Activated B cell treated with CpG ODN at 0.5 μM for 24 hours (primary cell): ENCODE measurements at regions of chr21 and their contacts with region 1.

Region 1: DNA sequence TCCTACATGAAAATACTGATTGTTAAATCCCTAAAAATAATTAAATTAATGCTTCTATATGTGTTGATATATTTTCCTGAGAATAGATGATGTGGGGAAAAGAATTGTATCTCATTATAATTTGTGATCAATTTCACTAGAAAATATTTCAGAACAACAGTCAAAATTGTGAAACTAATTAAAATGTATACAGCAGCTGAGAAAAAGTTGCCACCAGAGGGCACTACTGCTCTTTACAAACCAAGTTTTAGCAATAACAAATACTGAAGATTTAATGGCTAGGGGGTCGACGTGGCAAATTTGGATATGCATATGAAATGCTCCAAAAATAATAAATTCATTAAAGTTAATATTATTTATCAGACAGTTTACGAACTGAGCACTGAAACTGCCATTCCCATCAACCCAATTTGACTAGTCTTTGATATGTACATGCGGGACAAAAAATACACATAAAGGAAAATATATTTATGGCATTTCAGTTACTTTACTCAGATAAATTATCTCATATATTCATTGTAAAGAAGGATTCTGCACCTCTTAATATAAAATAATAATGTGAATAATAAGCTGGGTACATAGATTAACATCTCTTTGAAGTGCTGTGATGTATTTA is 96.3 kb upstream of the TMPRSS15 start:
- DNase-seq: no peak
- ATAC-seq: no peak
- H3K4me3 Mint-ChIP-seq: no peak overlapping the region
- H3K27ac Mint-ChIP-seq: no peak overlapping the region
- H3K4me1 Mint-ChIP-seq: no peaks in the 10 kb centered on the region
- H3K27me3 Mint-ChIP-seq: no peaks in the 10 kb centered on the region
- CTCF ChIP-seq: no peak

Region 2: DNA sequence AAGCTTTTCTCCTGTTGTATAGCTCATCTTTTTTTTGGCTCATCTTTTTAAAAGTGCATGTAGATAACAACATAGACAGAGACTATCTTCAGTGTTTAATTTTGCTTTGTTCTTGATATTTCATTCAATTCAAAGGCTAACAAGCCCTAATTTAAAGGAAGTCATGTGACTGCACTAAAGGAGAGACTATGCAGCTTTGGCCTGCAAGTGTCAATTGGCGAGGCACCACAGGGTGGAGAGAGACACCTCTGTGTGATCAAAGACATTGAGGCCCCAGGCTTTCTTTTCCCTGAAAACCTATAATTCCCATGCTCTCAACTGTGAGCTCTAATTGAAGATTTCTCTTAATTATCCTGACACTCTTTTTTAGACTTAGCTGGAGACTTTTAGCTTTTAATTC is 201.6 kb before region 1 on chr21:
- CTCF ChIA-PET with region 1: no interaction called
- POLR2A ChIA-PET with region 1: no interaction called
- intact Hi-C with region 1: loop called (anchors 10 kb)
- DNase-seq: no peak
- ATAC-seq: no peak
- H3K4me3 Mint-ChIP-seq: no peak overlapping the region
- H3K27ac Mint-ChIP-seq: no peak overlapping the region
- H3K4me1 Mint-ChIP-seq: no peaks in the 10 kb centered on the region
- H3K27me3 Mint-ChIP-seq: no peaks in the 10 kb centered on the region
- CTCF ChIP-seq: no peak

Region 3: DNA sequence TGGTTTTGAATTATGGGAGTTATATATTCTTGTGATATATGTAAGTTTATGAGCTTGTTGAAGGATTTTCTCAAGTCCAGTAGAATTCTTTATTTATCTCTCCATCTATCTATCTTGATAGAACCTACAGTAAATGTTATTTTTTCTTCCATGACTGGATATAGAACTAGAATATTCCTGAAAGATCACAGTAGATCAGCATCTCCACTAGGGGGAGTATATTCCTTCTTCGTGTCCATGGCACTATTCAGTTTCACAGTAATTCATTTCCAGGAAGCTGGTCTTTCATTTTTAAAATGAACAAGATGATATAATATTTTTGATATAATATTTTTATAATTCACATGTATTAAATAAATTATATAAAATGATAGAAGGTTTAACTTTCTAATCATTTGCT is 115.1 kb before region 1 on chr21:
- CTCF ChIA-PET with region 1: interaction called, 4 read pairs
- POLR2A ChIA-PET with region 1: no interaction called
- intact Hi-C with region 1: loop called (anchors 5 kb)
- DNase-seq: no peak
- ATAC-seq: no peak
- H3K4me3 Mint-ChIP-seq: no peak overlapping the region
- H3K27ac Mint-ChIP-seq: no peak overlapping the region
- H3K4me1 Mint-ChIP-seq: peaks cover 16% of the 10 kb centered on the region
- H3K27me3 Mint-ChIP-seq: no peaks in the 10 kb centered on the region
- CTCF ChIP-seq: no peak

Region 4: GRCh38 chr21:18542081-18542480 is 42.2 kb after region 1 on chr21:
- CTCF ChIA-PET with region 1: no interaction called
- POLR2A ChIA-PET with region 1: no interaction called
- intact Hi-C with region 1: no loop called
- DNase-seq: no peak
- ATAC-seq: no peak
- H3K4me3 Mint-ChIP-seq: no peak overlapping the region
- H3K27ac Mint-ChIP-seq: no peak overlapping the region
- H3K4me1 Mint-ChIP-seq: no peaks in the 10 kb centered on the region
- H3K27me3 Mint-ChIP-seq: no peaks in the 10 kb centered on the region
- CTCF ChIP-seq: no peak